Thyroid gland (tissue), 4 donors: ENCODE measurements at regions of chr12 and their contacts with region 1.

Region 1: DNA sequence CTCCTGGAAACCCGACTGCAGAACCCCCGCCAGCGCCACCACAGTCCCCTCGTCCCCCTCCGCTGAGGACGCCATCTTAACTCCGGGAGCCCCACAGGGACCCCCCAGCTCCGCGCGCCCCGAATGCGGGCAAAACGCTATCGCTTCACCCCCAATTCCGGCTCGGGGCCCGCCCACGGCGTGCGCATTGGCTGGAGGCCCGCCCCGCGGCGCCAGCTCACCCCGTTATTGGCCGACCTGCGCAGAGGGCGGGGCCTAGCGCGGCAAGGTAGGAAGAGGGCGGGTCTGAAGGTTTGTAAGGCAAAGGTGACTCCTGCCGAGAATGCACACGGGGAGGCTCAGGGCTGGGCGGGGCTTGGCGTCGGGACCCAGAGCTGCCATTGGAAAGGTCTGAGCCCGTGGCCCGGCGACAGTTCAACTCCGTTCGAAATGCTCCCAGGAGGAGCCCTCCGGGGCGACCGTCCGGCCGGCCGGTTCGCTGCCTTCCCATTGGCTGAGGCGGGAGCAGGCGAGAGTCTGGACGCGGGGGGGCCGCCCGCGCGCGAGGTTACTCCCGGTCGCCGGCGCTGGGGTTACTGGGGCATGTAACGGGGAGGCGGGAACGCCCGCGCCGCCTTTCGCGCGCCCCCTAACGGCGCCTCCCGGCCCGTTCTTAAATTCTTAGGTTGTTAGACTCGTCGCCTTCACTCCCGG is at the start of gene LPCAT3:
- DNase-seq: peak; percentile 98 to 99
- H3K4me3 ChIP-seq: peak within 1 kb of the TSS; percentile 67 to 95 (median 72)
- H3K27ac ChIP-seq: peak within 1 kb of the TSS; percentile 36 to 95 (median 86)
- H3K4me1 ChIP-seq: peaks cover 16 to 29% of the 10 kb centered on the region in 2 donors
- H3K27me3 ChIP-seq: no peaks in the 10 kb centered on the region
- CTCF ChIP-seq: peak; percentile 60 to 91 (median 80)
- POLR2A ChIP-seq: peak; percentile 72 to 86
- total RNA-seq, gene LPCAT3: 45.1 to 68.4 (median 58.5) TPM

Region 2: GRCh38 chr12:6723607-6724396 is 294.7 kb before region 1 on chr12 and contains the start of gene COPS7A:
- intact Hi-C with region 1: no loop called
- DNase-seq: peak; percentile 99
- H3K4me3 ChIP-seq: peak within 1 kb of the TSS; percentile 29 to 47 (median 37)
- H3K27ac ChIP-seq: peak within 1 kb of the TSS; percentile 51 to 69 (median 66)
- H3K4me1 ChIP-seq: peaks cover 4 to 11% of the 10 kb centered on the region in 2 donors
- H3K27me3 ChIP-seq: no peaks in the 10 kb centered on the region
- CTCF ChIP-seq: peak in 1 of 6 experiments; percentile 6
- POLR2A ChIP-seq: peak in 1 of 2 donors; percentile 64
- total RNA-seq, gene COPS7A: 44.5 to 86.7 (median 63.1) TPM

Region 3: GRCh38 chr12:6965026-6965661 is 53.4 kb before region 1 on chr12:
- intact Hi-C with region 1: loop called (anchors 5 kb)
- DNase-seq: peak; percentile 86 to 91
- H3K4me3 ChIP-seq: peak overlapping the region in 1 of 3 donors; percentile 68
- H3K27ac ChIP-seq: peak overlapping the region; percentile 14 to 97 (median 79)
- H3K4me1 ChIP-seq: peaks cover 47 to 54% of the 10 kb centered on the region in 2 donors
- H3K27me3 ChIP-seq: no peaks in the 10 kb centered on the region
- CTCF ChIP-seq: peak; percentile 77 to 88 (median 85)
- POLR2A ChIP-seq: no peak